Adrenal gland (tissue), 19 donors: ENCODE measurements at regions of chr1 and their contacts with region 1.

Region 1: DNA sequence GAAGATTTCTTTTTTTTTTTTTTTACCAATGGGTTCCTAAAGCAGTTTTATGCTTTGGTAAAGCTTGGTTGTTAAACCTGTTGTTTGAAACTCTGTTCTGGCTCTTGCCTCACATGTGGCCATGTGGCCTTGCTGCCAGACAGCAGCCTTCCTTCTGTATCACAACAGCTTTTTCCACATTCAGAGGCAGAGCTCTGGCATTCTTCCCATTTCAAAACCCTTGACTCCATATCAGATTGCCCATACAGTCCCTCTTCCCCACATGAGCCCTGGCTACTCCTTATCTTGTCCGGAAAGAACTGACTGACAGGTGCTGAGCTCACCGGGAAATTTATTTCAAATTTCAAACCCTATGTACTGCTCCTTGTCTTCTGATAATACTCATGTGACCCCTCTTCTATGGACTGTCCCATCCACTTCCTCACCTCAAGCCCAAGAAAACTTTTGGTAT is 38.5 kb upstream of the LAX1 start:
- DNase-seq: peak in 6 of 7 donors; percentile 62 to 83 (median 71)
- H3K4me3 ChIP-seq: no peak overlapping the region
- H3K27ac ChIP-seq: peak overlapping the region in 2 of 5 donors; percentile 32 to 33
- H3K4me1 ChIP-seq: peaks cover 4 to 7% of the 10 kb centered on the region in 2 donors
- H3K27me3 ChIP-seq: no peaks in the 10 kb centered on the region
- CTCF ChIP-seq: no peak
- POLR2A ChIP-seq: no peak

Region 2: GRCh38 chr1:203861379-203862184 is 135.1 kb after region 1 on chr1 and contains the start of gene SNRPE:
- intact Hi-C with region 1: loop called in 1 of 2 experiments (anchors 10 kb)
- DNase-seq: peak; percentile 96 to 98 (median 97)
- H3K4me3 ChIP-seq: peak within 1 kb of the TSS; percentile 36 to 91 (median 72)
- H3K27ac ChIP-seq: peak within 1 kb of the TSS in 4 of 5 donors; percentile 46 to 85 (median 76)
- H3K4me1 ChIP-seq: peaks cover 15 to 18% of the 10 kb centered on the region in 2 donors
- H3K27me3 ChIP-seq: no peaks in the 10 kb centered on the region
- CTCF ChIP-seq: peak; percentile 90 to 100 (median 98)
- POLR2A ChIP-seq: peak in 1 of 2 donors; percentile 39
- total RNA-seq, gene SNRPE: 30.1 to 141 (median 91.2) TPM